HCT116 (cell line): ENCODE measurements at regions of chr22 and their contacts with region 1.

Region 1: DNA sequence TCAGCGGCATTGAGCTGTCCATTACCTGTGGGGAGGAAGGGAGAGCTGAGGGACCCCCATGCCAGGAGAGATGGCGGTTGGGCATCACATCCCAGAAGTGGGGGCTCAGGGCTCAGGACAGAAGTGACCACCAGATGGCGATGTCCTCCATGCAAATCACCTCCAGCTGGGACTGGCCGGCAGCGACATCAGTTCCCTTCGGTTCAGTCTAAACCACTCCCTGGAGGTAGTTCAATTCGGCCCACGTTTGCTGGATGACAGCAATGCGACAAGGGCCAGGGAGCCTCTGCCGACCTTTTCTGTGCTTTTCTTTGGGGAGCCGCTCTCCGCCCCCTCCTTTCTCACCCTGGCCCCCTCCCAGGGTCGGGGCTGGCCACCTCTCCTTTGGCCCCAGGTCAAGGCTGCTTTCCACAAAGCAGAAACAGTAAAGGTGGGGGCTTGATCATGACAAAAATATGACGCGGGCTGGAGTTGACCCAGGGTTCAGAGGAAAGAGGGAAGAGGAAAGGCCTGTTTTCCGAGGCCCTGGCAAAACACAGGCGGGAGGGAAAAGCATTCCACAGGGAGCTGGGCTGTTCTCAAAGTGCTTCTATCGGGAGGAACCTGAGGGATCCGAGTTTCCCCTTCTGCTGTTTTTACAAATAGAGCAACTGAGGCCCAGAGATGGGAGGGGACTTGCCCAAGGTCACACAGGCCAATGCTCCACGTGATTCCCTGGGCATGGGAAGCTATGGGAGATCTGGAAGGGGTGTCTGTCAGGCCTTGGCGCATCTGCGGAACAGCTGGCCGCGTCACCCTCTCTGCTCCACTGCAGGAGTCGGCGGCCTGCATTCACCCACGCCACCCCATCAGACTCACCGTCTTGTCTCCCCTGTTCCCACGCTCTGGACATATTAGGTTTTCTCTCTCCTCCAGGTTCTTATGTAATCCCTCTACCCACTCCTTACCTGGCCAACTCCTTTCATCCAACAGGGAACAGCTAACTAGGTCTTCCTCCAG is 54.7 kb downstream of the FBXO7 start:
- DNase-seq: peak; percentile 74
- ATAC-seq: peak; percentile 98
- H3K4me3 ChIP-seq: no peak overlapping the region
- H3K27ac ChIP-seq: no peak overlapping the region
- H3K4me1 ChIP-seq: peaks cover 0 to 4% of the 10 kb centered on the region in 2 experiments; a peak in 2 of 4 replicates
- H3K27me3 ChIP-seq: no peaks in the 10 kb centered on the region
- CTCF ChIP-seq: peak; percentile 61 to 91 (median 88)
- POLR2A ChIP-seq: no peak
- RAD21 ChIP-seq: peak; percentile 84

Region 2: GRCh38 chr22:32378707-32379272 is 150.5 kb before region 1 on chr22:
- CTCF ChIA-PET with region 1: no interaction called
- POLR2A ChIA-PET with region 1: no interaction called
- RAD21 ChIA-PET with region 1: no interaction called
- intact Hi-C with region 1: no loop called
- DNase-seq: peak; percentile 54
- ATAC-seq: peak; percentile 99
- H3K4me3 ChIP-seq: no peak overlapping the region
- H3K27ac ChIP-seq: no peak overlapping the region
- H3K4me1 ChIP-seq: no peaks in the 10 kb centered on the region; a peak in 1 of 4 replicates
- H3K27me3 ChIP-seq: no peaks in the 10 kb centered on the region
- CTCF ChIP-seq: peak; percentile 98
- POLR2A ChIP-seq: no peak
- RAD21 ChIP-seq: peak; percentile 80

Region 3: GRCh38 chr22:32644252-32645100 is 115.2 kb after region 1 on chr22:
- CTCF ChIA-PET with region 1: no interaction called
- POLR2A ChIA-PET with region 1: no interaction called
- RAD21 ChIA-PET with region 1: no interaction called
- intact Hi-C with region 1: loop called (anchors 5 kb)
- DNase-seq: no peak
- ATAC-seq: no peak
- H3K4me3 ChIP-seq: no peak overlapping the region
- H3K27ac ChIP-seq: no peak overlapping the region
- H3K4me1 ChIP-seq: no peaks in the 10 kb centered on the region
- H3K27me3 ChIP-seq: no peaks in the 10 kb centered on the region
- CTCF ChIP-seq: no peak
- POLR2A ChIP-seq: no peak
- RAD21 ChIP-seq: no peak

Region 4: DNA sequence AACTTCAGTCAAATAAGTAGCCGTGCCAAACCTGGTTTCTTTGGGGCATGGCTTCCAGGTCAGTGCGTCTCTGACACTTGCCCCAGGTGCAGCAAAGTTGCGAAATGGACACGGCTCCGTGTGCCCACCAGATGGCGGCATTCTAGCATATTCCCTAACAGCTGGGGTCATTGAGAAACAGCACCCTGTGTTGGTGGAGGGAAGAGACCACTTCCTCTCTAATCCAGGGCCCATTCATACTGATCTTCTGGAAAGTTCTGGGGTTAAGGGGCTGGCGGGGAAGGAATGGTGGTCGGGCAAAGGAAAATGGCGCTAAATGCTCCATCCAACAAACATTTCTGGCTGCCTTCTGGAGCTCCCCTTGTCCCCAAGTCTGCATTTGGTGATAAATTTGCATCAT is 131.0 kb after region 1 on chr22:
- CTCF ChIA-PET with region 1: no interaction called
- POLR2A ChIA-PET with region 1: no interaction called
- RAD21 ChIA-PET with region 1: no interaction called
- intact Hi-C with region 1: loop called (anchors 2 kb)
- DNase-seq: peak; percentile 37
- ATAC-seq: peak; percentile 94
- H3K4me3 ChIP-seq: no peak overlapping the region
- H3K27ac ChIP-seq: no peak overlapping the region
- H3K4me1 ChIP-seq: no peaks in the 10 kb centered on the region
- H3K27me3 ChIP-seq: peaks cover 19% of the 10 kb centered on the region; the same call in 1 of the 2 replicates
- CTCF ChIP-seq: peak; percentile 77 to 82 (median 80)
- POLR2A ChIP-seq: no peak
- RAD21 ChIP-seq: peak; percentile 85

Region 5: GRCh38 chr22:32823024-32823730 is 293.9 kb after region 1 on chr22:
- CTCF ChIA-PET with region 1: no interaction called
- POLR2A ChIA-PET with region 1: no interaction called
- RAD21 ChIA-PET with region 1: no interaction called
- intact Hi-C with region 1: loop called (anchors 1 kb)
- DNase-seq: peak; percentile 43
- ATAC-seq: peak; percentile 92
- H3K4me3 ChIP-seq: no peak overlapping the region
- H3K27ac ChIP-seq: no peak overlapping the region
- H3K4me1 ChIP-seq: no peaks in the 10 kb centered on the region
- H3K27me3 ChIP-seq: no peaks in the 10 kb centered on the region; the same call in 1 of the 2 replicates
- CTCF ChIP-seq: peak; percentile 30 to 73 (median 67); a peak in 5 of 6 replicates
- POLR2A ChIP-seq: no peak
- RAD21 ChIP-seq: peak; percentile 52

Region 6: DNA sequence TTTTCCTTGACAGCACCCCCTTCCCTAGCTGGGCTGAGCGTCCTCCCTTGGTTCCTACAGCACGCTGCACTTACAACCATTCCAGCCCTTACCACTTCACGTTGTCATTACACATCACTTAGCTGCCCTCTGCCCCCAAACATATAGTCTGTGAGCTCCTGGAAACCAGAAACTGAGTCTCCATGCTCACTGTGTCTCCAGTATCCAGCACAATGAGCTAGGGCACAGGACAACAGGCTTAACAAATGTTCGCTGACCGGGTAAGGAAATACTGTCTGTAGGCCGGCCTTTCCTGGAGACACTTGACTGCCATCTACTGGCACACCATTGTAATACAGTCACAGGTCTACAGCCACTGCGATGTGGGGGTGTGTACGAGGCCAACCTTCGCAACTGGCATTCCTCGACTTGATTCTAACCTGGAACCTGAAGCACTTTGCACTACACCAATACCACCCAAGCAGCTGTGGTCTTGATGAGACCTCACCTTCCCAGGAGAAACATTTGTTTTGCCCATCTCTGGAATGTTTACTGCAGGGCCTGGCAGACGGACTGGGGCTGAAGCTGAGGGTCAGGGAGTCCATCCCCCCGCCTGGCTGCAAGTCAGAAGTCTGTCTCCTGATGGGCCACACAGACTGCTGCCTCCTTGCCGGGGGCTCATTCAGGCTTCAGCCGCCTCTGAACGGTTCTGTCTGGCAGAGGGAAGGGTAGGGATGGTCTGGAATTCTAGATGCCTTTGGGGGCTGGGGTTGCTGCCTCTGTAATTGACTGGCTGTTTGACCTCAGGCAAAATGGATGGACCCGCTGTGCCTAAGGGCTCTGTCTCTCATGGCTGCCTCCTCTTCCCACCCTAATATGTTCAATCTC is 456.8 kb after region 1 on chr22:
- CTCF ChIA-PET with region 1: interaction called, 12 read pairs
- POLR2A ChIA-PET with region 1: no interaction called
- RAD21 ChIA-PET with region 1: no interaction called
- intact Hi-C with region 1: loop called (anchors 5 kb)
- DNase-seq: peak; percentile 57
- ATAC-seq: peak; percentile 99
- H3K4me3 ChIP-seq: no peak overlapping the region
- H3K27ac ChIP-seq: no peak overlapping the region
- H3K4me1 ChIP-seq: peaks cover 0 to 2% of the 10 kb centered on the region in 2 experiments; a peak in 1 of 4 replicates
- H3K27me3 ChIP-seq: no peaks in the 10 kb centered on the region
- CTCF ChIP-seq: peak; percentile 44 to 86 (median 75); a peak in 5 of 6 replicates
- POLR2A ChIP-seq: no peak
- RAD21 ChIP-seq: peak; percentile 69

Region 7: DNA sequence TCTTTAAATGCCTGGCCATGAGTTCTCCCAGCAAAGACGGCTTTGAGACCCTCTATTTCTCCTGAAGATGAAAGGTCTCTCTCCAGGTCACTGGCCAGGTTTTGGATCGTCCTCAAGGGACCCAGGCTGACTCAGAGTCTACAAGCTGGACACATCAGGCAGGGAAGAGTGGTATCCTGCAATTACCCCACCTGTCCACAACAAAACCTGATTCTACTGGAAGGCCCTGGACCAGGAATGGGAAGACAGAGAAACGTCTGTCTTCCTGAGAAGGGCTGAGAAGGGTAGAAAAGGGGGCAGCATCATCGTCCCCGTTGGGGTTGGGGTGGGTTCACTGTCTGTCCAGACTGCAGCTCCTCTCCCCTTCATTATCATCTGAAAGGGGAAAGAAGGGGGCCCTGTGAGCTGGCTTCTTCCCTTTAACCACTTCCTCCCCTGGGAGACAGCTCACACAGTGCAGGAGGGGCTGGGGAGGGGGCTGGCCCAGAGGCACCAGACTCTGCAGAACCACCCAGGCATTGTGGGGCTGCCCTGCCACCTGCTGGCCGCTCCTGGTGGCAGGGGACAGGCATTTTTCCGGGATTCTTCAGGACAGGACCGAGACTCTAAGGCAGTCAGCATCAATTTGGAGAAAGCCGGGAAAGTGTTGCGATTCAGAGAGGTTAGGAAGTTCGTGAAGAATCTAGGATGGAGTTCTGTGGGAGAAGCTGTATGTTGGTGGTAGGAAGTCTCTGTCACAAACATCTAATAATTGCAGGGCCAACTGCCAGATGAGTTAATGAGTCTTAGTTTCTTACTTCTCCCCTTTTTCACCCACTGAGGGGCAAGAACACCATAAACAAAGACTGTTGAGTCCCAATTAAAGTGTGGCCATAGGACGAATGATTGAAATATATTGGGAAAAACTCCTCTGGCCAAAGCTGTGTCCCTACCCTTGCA is 471.3 kb after region 1 on chr22:
- CTCF ChIA-PET with region 1: interaction called, 6 read pairs
- POLR2A ChIA-PET with region 1: no interaction called
- RAD21 ChIA-PET with region 1: interaction called in 1 of 2 experiments, 3 read pairs
- intact Hi-C with region 1: loop called (anchors 1 kb)
- DNase-seq: no peak
- ATAC-seq: peak; percentile 88
- H3K4me3 ChIP-seq: no peak overlapping the region
- H3K27ac ChIP-seq: no peak overlapping the region
- H3K4me1 ChIP-seq: peaks cover 0 to 4% of the 10 kb centered on the region in 2 experiments; a peak in 1 of 4 replicates
- H3K27me3 ChIP-seq: peaks cover 5% of the 10 kb centered on the region
- CTCF ChIP-seq: peak; percentile 31 to 91 (median 83); a peak in 4 of 6 replicates
- POLR2A ChIP-seq: no peak
- RAD21 ChIP-seq: peak; percentile 66